Tibial artery (tissue), 4 donors: ENCODE measurements at regions of chr14 and their contacts with region 1.

Region 1: GRCh38 chr14:90301668-90302090 is 30.1 kb downstream of the NRDE2 start:
- DNase-seq: no peak
- H3K4me3 ChIP-seq: no peak overlapping the region
- H3K27ac ChIP-seq: peak overlapping the region; percentile 65 to 70
- H3K4me1 ChIP-seq: peaks cover 0 to 25% (median 10%) of the 10 kb centered on the region in 4 donors
- H3K27me3 ChIP-seq: no peaks in the 10 kb centered on the region
- CTCF ChIP-seq: peak; percentile 51 to 54

Region 2: DNA sequence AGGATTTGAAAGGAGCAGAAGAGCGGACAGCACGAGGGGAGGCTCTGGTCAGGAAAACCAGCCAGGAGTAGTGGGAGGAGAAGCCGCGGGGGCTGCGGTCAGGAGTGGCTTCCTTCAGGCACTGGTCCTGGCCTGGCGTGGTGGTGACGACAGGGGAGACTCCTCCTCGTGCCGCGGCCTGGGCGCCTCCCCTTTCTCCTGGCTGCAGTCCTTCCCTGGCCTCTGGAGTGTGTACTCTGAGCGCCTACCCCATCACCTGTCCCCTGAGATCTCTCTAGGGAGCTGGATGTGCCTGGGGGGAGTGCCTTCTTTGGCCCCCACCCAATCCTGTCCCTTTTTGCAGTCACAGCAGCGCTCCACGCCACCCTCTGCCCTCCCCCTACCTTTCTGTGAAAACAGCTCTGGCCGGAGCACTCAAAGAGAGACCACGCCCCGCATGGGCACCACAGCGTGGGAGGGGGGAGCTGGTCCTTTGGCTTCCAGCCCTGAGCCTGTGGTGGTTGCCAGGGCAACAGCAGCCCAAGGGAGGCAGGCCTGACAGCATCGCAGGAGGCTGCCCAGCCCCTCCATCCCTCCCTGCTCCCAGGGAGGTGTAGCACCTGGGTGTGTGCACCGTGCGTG is 221.0 kb after region 1 on chr14:
- intact Hi-C with region 1: loop called (anchors 10 kb)
- DNase-seq: peak; percentile 59 to 93
- H3K4me3 ChIP-seq: peak overlapping the region in 1 of 2 donors; percentile 14
- H3K27ac ChIP-seq: peak overlapping the region; percentile 74 to 76
- H3K4me1 ChIP-seq: peaks cover 6 to 66% (median 52%) of the 10 kb centered on the region in 4 donors
- H3K27me3 ChIP-seq: no peaks in the 10 kb centered on the region
- CTCF ChIP-seq: no peak

Region 3: GRCh38 chr14:90697577-90698206 is 396.0 kb after region 1 on chr14:
- intact Hi-C with region 1: loop called (anchors 10 kb)
- DNase-seq: peak; percentile 86 to 92
- H3K4me3 ChIP-seq: no peak overlapping the region
- H3K27ac ChIP-seq: peak overlapping the region; percentile 79
- H3K4me1 ChIP-seq: peaks cover 0 to 33% (median 25%) of the 10 kb centered on the region in 4 donors
- H3K27me3 ChIP-seq: no peaks in the 10 kb centered on the region
- CTCF ChIP-seq: peak; percentile 95 to 96

Region 4: DNA sequence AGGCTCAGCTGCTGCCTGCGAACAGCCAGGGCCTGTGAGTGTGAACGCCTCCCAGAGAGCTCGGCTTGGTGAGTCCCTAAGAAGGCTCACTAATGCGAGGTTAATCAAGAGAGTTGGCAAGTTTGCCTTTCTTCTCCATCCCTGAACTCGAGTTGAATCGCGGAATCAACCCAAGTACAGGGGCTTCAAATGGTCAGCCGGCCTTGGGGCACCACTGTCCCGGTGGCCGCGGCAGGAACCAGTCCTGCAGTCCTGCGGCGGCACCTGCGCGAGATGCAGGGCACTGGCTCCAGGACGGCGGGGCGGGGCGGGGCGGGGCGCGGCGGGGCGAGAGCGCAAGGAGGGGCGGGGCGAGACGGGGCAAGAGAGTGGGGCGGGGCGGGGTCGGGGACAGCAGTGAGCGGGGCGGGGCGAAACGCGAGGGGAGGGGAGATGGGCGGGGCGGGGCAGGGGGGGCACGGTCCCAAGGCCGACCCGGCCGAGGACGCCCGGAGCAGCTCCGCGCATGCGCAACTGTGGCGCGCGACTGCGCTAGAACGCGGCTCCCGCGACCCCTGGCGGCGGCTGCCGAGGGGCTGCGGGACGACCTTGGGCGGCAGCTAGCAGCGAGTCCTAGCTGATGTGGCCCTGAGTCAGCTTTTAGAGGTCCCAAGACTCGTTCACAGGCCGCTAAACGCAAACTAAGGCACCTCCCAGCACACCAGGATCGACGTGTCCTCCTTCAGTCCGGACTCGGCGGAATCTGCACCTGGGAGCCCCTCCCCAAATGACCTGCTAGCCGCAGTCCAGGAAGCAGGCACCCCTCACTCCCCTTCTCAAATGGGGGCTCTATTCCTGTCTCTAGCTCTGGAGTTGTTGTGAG is 456.6 kb after region 1 on chr14:
- intact Hi-C with region 1: loop called (anchors 5 kb)
- DNase-seq: peak; percentile 88 to 96
- H3K4me3 ChIP-seq: peak overlapping the region; percentile 48 to 59
- H3K27ac ChIP-seq: peak overlapping the region; percentile 88 to 94
- H3K4me1 ChIP-seq: peaks cover 0 to 35% (median 18%) of the 10 kb centered on the region in 4 donors
- H3K27me3 ChIP-seq: no peaks in the 10 kb centered on the region
- CTCF ChIP-seq: peak; percentile 85 to 94